RWPE1 (cell line): ENCODE measurements at regions of chr6 and their contacts with region 1.

Region 1: DNA sequence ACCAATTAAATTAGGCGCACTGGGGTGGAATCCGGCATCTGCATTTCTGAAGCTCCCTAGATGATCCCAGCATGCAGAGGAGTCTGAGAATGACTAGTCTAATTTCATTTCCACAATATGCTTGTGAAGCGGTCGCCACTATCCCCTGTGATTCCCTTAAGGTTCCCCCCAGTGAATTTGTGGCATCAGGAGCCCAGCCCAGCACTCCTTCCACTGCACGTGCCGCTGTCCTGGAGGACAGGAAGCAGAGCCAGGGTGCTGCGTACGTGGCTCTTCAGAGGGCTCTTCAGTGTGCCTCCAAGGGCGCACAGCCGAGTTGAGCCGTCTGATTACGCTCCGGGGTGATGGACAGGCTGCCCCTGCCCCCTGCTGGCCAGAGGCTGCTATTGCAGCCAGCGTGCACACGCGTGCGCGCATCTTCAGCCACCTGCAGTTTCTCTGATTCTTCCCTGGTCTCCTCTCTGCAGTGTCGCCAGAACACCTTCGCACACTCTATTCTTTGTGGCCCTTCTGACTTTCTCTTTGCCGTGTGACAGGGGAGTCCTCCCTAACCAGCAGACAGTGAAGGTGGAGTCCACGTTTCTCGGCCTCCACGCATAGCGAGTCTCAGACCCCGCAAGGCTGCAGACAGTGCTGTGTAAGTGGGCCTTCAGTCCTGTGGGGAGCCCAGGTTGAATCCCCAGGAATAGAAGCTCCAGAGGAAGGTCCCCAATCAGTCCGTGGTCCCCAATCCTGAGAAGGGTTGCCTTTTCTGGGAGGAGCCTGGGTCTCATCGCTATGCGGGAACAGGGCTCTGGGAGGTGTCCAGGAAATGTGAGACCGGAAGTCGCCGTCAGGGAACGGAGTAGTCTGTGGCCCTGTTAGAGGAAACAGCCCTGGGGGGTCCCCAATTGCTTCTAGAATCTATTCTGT is 16.5 kb upstream of the NCR2 start:
- DNase-seq: peak; percentile 64
- H3K27ac ChIP-seq: no peak overlapping the region
- CTCF ChIP-seq: peak; percentile 97

Region 2: GRCh38 chr6:41306187-41306854 is 12.6 kb before region 1 on chr6:
- CTCF ChIA-PET with region 1: interaction called, 12 read pairs
- POLR2A ChIA-PET with region 1: no interaction called
- DNase-seq: peak; percentile 67
- H3K27ac ChIP-seq: no peak overlapping the region
- CTCF ChIP-seq: peak; percentile 65; the same call in 1 of the 2 replicates